BJ (cell line): ENCODE measurements at regions of chr20 and their contacts with region 1.

Region 1: DNA sequence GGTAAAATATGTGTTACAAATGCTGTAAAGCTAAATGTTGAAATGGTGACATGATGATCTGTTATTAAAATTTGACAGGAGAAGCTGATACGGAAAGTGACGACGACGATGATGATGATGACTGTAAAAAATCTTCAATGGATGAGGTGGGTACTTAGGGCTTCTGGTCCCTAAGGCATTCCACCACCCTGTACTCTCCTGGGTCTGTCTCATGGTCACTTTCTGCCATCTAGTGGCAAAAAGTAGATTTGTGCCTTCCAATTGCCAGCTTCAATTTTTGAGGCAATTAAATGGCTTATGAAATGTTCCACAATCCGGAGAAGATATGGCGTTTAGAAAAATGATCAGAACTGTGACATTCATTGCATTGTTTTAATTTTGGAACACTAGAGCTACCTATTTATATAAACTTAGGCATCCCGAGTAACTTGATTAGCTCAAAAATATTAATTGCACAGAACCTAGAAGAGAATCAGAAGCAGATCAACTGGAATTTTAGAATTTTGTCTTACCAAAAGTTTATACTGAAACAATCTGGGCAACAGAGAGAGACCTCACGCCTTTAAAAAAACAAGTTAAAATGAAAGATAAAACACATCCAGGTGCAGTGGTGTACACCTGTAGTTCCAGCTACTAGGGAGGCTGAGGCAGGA is 346.5 kb upstream of the PLCB4 start:
- DNase-seq: no peak
- H3K4me3 ChIP-seq: no peak overlapping the region
- H3K27me3 ChIP-seq: no peaks in the 10 kb centered on the region
- CTCF ChIP-seq: peak; percentile 76

Region 2: GRCh38 chr20:7926767-7927166 is 795.6 kb before region 1 on chr20:
- CTCF ChIA-PET with region 1: interaction called, 14 read pairs
- POLR2A ChIA-PET with region 1: no interaction called
- DNase-seq: no peak
- H3K4me3 ChIP-seq: no peak overlapping the region
- H3K27me3 ChIP-seq: peaks cover 2% of the 10 kb centered on the region; the same call in 1 of the 2 replicates
- CTCF ChIP-seq: peak; percentile 61

Region 3: GRCh38 chr20:7980332-7981046 is 741.9 kb before region 1 on chr20:
- CTCF ChIA-PET with region 1: interaction called, 23 read pairs
- POLR2A ChIA-PET with region 1: no interaction called
- DNase-seq: no peak
- H3K4me3 ChIP-seq: no peak overlapping the region
- H3K27me3 ChIP-seq: no peaks in the 10 kb centered on the region
- CTCF ChIP-seq: peak; percentile 61

Region 4: DNA sequence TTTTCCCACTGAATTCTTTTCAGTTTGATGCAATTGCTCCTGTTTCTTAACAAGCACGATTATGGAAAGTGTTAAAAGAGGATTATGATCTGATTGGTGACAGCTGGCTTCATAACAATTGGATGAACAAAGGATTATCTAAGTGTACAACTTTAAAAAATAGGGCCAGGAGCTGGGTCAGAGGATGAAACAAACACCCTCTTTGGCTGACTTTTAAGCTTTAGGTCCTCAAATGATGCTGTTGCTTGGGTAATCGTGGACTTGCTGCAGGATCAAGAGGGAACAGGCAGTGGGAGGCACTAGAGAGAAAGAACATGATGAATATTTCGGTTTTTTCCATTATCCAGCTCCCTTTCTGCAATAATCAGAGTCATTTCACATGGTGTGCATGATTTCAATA is 667.3 kb before region 1 on chr20:
- CTCF ChIA-PET with region 1: interaction called, 183 read pairs
- POLR2A ChIA-PET with region 1: no interaction called
- DNase-seq: no peak
- H3K4me3 ChIP-seq: no peak overlapping the region
- H3K27me3 ChIP-seq: no peaks in the 10 kb centered on the region
- CTCF ChIP-seq: no peak

Region 5: GRCh38 chr20:8131598-8132483 is 590.6 kb before region 1 on chr20 and contains the start of gene PLCB1:
- CTCF ChIA-PET with region 1: interaction called, 80 read pairs
- POLR2A ChIA-PET with region 1: no interaction called
- DNase-seq: no peak
- H3K4me3 ChIP-seq: peak within 1 kb of the TSS; percentile 76
- H3K27me3 ChIP-seq: no peaks in the 10 kb centered on the region
- CTCF ChIP-seq: peak; percentile 94
- polyA plus RNA-seq, gene PLCB1: 13.5 and 15.2 TPM in 2 replicates

Region 6: GRCh38 chr20:8535403-8536261 is 186.8 kb before region 1 on chr20:
- CTCF ChIA-PET with region 1: interaction called, 24 read pairs
- POLR2A ChIA-PET with region 1: no interaction called
- DNase-seq: no peak
- H3K4me3 ChIP-seq: no peak overlapping the region
- H3K27me3 ChIP-seq: no peaks in the 10 kb centered on the region
- CTCF ChIP-seq: peak; percentile 61

Region 7: DNA sequence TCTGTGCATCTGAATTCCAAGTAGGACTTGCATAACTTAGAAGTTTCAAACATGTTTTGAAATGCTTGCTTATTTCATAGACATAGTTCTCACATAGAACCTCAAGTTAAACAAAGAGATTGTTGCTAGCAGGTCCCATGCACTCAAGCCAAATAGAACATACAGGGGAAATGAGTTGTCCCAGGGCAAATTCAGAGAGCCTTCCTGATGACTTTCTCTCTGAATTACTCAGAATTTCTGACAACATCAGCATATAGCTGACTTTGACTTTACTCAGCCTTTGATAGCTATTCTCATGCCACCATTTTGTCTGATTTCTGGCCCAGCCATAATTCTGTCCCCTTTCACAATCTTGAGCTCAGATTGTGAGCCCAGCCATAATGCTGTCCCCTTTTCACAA is 13.3 kb after region 1 on chr20:
- CTCF ChIA-PET with region 1: interaction called, 29 read pairs
- POLR2A ChIA-PET with region 1: no interaction called
- DNase-seq: no peak
- H3K4me3 ChIP-seq: no peak overlapping the region
- H3K27me3 ChIP-seq: no peaks in the 10 kb centered on the region
- CTCF ChIP-seq: no peak

Region 8: GRCh38 chr20:8867181-8867740 is 144.9 kb after region 1 on chr20:
- CTCF ChIA-PET with region 1: no interaction called
- POLR2A ChIA-PET with region 1: no interaction called
- DNase-seq: no peak
- H3K4me3 ChIP-seq: no peak overlapping the region
- H3K27me3 ChIP-seq: no peaks in the 10 kb centered on the region
- CTCF ChIP-seq: no peak